ENCODE measurements at regions of chr9 and their contacts with region 1.

Region 1: GRCh38 chr9:78035383-78035993 is 3.9 kb upstream of the GNAQ start:
- DNase-seq: peak; percentile 44
- H3K4me3 ChIP-seq: no peak overlapping the region
- H3K27me3 ChIP-seq: no peaks in the 10 kb centered on the region
- CTCF ChIP-seq: peak; percentile 84

Region 2: GRCh38 chr9:77841739-77842386 is 193.6 kb before region 1 on chr9:
- CTCF ChIA-PET with region 1: interaction called, 10 read pairs
- POLR2A ChIA-PET with region 1: no interaction called
- DNase-seq: no peak
- H3K4me3 ChIP-seq: no peak overlapping the region
- H3K27me3 ChIP-seq: no peaks in the 10 kb centered on the region
- CTCF ChIP-seq: peak; percentile 36; the same call in 1 of the 2 replicates